ENCODE measurements at regions of chr10 and their contacts with region 1.

Region 1: DNA sequence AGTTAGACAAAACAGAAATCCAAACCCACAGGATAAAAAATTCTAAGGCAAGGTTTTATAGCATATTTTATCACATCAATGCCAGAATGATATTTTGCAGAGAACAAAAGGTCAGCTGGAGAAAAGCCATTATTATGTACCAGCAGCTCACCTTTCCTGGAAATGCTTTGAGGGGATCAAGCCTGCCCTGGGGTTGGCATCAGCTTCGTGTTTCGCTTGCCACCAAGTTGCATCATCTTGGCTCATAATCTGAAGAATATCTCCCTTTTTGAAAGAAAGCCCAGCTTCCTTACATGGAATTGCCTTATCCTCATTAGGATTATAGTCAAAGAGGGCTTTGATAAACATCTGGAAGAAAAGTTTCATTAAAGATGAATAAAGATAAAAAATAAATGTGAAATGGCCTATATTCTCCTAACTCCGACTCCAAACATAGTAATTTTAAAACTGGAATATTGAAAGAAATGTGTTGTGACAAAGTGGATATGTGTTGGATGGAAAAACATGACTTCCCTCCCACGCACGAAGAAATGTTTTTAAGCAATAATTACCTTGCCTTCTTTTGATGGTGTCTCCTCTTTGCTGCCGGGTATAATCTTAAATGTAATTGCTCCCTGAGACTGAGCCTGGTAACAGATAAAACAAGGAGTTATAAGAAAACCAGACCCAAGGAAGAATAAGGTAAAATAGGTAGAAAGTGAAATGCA is 121.3 kb upstream of the ODAD2 start:
- DNase-seq: peak; percentile 44
- ATAC-seq: peak; percentile 13
- H3K4me3 ChIP-seq: no peak overlapping the region
- H3K27ac ChIP-seq: peak overlapping the region; percentile 41
- H3K4me1 ChIP-seq: peaks cover 40% of the 10 kb centered on the region
- H3K27me3 ChIP-seq: no peaks in the 10 kb centered on the region
- CTCF ChIP-seq: no peak

Region 2: DNA sequence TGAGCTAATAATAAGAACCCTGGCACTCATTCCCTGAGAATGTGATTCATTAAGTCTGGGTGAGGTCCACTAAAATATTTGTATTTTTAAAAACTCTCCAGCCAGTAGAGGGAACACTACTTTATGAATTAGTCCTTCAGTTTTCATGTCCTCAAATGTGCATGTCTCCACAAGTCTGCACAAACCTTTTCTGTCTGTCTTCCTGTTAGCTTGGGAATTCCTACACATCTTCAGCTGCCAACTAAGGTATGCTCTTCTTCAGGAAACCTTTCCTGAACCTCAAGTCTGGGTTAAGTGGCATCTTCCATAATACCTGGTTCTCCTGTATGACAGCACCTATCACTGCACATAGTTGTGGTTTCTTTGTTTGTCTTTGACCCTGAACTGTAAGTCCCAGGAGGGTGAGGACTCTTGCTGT is 255.0 kb before region 1 on chr10:
- CTCF ChIA-PET with region 1: no interaction called
- POLR2A ChIA-PET with region 1: interaction called, 18 read pairs
- intact Hi-C with region 1: no loop called
- DNase-seq: peak; percentile 52
- ATAC-seq: peak; percentile 60
- H3K4me3 ChIP-seq: no peak overlapping the region
- H3K27ac ChIP-seq: no peak overlapping the region
- H3K4me1 ChIP-seq: peaks cover 13% of the 10 kb centered on the region
- H3K27me3 ChIP-seq: no peaks in the 10 kb centered on the region
- CTCF ChIP-seq: peak; percentile 42

Measured in PC-3 (cell line).